ENCODE measurements at regions of chr7 and their contacts with region 1.

Region 1: GRCh38 chr7:29297194-29297890 is 102.8 kb downstream of the CHN2 start:
- DNase-seq: peak in 1 of 9 experiments; percentile 22
- ATAC-seq: no peak
- H3K4me3 ChIP-seq: no peak overlapping the region
- H3K4me3 Mint-ChIP-seq: no peak overlapping the region
- H3K27ac ChIP-seq: no peak overlapping the region
- H3K27ac Mint-ChIP-seq: no peak overlapping the region
- H3K4me1 ChIP-seq: no peaks in the 10 kb centered on the region
- H3K4me1 Mint-ChIP-seq: no peaks in the 10 kb centered on the region
- H3K27me3 ChIP-seq: no peaks in the 10 kb centered on the region
- H3K27me3 Mint-ChIP-seq: no peaks in the 10 kb centered on the region
- CTCF ChIP-seq: no peak

Region 2: GRCh38 chr7:29254591-29254990 is 42.8 kb before region 1 on chr7:
- CTCF ChIA-PET with region 1: no interaction called
- POLR2A ChIA-PET with region 1: no interaction called
- intact Hi-C with region 1: no loop called
- DNase-seq: no peak
- ATAC-seq: no peak
- H3K4me3 ChIP-seq: no peak overlapping the region
- H3K4me3 Mint-ChIP-seq: no peak overlapping the region
- H3K27ac ChIP-seq: no peak overlapping the region
- H3K27ac Mint-ChIP-seq: no peak overlapping the region
- H3K4me1 ChIP-seq: no peaks in the 10 kb centered on the region
- H3K4me1 Mint-ChIP-seq: peaks cover 14% of the 10 kb centered on the region
- H3K27me3 ChIP-seq: no peaks in the 10 kb centered on the region
- H3K27me3 Mint-ChIP-seq: no peaks in the 10 kb centered on the region
- CTCF ChIP-seq: no peak

Region 3: DNA sequence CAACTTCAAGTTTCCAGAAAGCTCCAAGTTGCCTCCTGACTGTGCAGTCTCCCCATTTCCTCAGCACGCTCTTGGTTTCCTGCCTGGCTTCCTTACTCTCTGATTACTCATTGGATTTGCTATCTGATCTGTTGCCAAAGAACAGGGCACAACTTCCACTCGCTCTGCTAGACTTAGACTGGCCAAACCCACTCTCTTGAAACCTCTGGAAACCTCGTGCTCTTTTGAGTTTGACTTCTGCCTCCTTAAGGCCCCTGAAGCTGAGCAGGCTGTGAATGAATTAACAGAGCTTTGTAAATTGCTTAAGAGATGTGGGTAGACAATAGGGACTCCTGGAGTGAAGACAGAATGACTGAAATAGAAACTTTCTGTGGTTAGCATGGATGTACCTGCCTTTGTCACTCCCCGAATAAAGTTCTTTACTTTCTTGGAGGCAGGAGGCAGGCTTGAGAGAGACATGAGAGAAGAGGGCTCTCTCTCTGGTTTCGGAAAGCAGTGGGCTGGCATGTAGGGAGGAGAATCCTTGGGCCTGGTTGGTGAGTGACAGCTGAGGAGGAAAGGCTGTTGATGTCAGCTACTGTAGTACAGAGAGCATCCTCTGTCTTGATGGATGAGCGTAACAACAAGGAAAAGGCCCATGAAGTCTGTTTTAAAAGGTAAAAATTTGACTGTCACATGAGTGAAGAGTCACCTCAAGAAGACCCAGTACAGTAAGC is 32.0 kb before region 1 on chr7:
- CTCF ChIA-PET with region 1: no interaction called
- POLR2A ChIA-PET with region 1: no interaction called
- intact Hi-C with region 1: loop called in 1 of 2 experiments (anchors 1 kb)
- DNase-seq: no peak
- ATAC-seq: no peak
- H3K4me3 ChIP-seq: no peak overlapping the region
- H3K4me3 Mint-ChIP-seq: no peak overlapping the region
- H3K27ac ChIP-seq: no peak overlapping the region
- H3K27ac Mint-ChIP-seq: no peak overlapping the region
- H3K4me1 ChIP-seq: no peaks in the 10 kb centered on the region
- H3K4me1 Mint-ChIP-seq: peaks cover 7% of the 10 kb centered on the region
- H3K27me3 ChIP-seq: no peaks in the 10 kb centered on the region
- H3K27me3 Mint-ChIP-seq: no peaks in the 10 kb centered on the region
- CTCF ChIP-seq: no peak